Ovary (tissue), 10 donors: ENCODE measurements at regions of chr13 and their contacts with region 1.

Region 1: GRCh38 chr13:30752201-30752797 is 17.0 kb downstream of the ALOX5AP start:
- DNase-seq: no peak
- H3K4me3 ChIP-seq: no peak overlapping the region
- H3K27ac ChIP-seq: no peak overlapping the region
- H3K4me1 ChIP-seq: peaks cover 4% of the 10 kb centered on the region
- H3K27me3 ChIP-seq: no peaks in the 10 kb centered on the region
- CTCF ChIP-seq: no peak
- EP300 ChIP-seq: no peak
- POLR2A ChIP-seq: no peak

Region 2: DNA sequence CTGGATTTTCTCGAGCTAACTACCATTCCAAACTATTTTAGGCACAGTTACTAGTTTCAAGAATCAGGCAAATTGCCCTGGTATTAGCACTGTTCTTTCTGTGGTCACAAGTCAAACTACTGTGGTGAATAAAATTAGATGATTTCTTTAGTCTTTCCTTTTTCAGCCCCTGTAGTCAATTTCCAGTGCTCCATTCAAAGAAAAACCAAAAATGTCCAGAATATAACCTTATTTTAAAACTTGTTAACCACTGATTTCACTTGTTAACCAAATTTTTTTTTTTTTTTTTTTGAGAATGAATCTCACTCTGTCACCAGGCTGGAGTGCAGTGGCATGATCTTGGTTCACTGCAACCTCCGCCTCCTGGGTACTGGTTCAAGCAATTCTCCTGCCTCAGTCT is 185.2 kb before region 1 on chr13:
- intact Hi-C with region 1: no loop called
- DNase-seq: no peak
- H3K4me3 ChIP-seq: no peak overlapping the region
- H3K27ac ChIP-seq: no peak overlapping the region
- H3K4me1 ChIP-seq: no peaks in the 10 kb centered on the region
- H3K27me3 ChIP-seq: no peaks in the 10 kb centered on the region
- CTCF ChIP-seq: no peak
- EP300 ChIP-seq: no peak
- POLR2A ChIP-seq: no peak

Region 3: DNA sequence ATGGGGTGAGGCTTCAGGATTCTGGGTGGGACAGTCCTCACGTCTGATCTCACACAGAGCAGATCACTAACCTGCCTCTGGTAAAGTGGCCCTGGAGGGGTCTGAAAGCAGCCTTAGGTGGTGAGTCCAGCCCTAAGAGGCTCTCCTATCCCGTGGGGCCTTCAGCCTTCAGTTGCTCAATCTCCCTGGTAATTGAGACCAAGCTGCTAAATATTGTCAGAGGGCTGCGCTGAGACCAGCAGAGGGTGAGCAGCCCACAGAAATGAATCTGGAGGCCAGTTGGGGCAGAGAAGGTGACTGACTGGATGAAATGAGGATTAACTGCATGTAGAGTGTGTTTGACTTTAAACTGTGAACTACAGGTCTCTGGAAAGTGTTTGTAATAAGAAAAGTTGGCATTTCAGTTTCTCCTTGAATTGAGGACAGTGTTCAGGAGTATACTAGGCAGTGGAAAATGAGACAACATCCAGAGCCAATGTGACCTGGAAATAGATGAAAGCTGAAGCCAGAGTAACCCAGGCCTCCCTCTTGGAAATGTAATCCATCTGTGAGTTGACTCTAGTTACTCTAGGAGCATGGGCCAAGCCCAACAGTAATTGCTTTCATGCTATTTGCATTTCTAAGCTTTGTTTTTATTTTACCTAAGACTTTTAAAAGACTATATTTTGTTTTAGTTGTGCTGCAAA is 423.7 kb after region 1 on chr13:
- intact Hi-C with region 1: loop called in 1 of 4 experiments (anchors 5 kb)
- DNase-seq: no peak
- H3K4me3 ChIP-seq: no peak overlapping the region
- H3K27ac ChIP-seq: no peak overlapping the region
- H3K4me1 ChIP-seq: no peaks in the 10 kb centered on the region
- H3K27me3 ChIP-seq: no peaks in the 10 kb centered on the region
- CTCF ChIP-seq: no peak
- EP300 ChIP-seq: no peak
- POLR2A ChIP-seq: no peak